ENCODE measurements at regions of chr1 and their contacts with region 1.

Region 1: DNA sequence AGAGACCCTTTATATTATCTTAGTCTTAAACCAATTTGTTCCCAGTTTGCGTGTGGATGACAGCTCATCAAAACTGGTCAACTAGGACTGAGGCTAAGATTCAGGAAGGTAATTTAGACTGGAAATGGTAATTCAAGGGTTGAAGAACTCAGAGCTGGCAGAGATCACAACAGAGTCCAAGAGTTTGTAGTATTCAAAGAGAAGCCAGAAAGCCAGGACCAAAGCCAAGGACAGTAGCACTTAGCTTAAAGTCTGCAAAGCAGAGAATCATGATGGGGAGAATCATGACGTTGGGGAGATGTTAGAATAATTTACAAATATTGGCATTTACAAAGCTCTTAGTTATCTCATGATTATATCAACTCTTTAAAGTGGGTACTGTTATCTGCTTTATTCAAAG is 32.6 kb downstream of the RNF11 start:
- DNase-seq: no peak
- H3K4me3 ChIP-seq: peak overlapping the region in 1 of 7 experiments; percentile 23
- H3K27ac ChIP-seq: peak overlapping the region in 1 of 2 experiments; percentile 64
- H3K4me1 ChIP-seq: peaks cover 10 to 51% (median 34%) of the 10 kb centered on the region in 4 experiments
- H3K27me3 ChIP-seq: no peaks in the 10 kb centered on the region

Region 2: DNA sequence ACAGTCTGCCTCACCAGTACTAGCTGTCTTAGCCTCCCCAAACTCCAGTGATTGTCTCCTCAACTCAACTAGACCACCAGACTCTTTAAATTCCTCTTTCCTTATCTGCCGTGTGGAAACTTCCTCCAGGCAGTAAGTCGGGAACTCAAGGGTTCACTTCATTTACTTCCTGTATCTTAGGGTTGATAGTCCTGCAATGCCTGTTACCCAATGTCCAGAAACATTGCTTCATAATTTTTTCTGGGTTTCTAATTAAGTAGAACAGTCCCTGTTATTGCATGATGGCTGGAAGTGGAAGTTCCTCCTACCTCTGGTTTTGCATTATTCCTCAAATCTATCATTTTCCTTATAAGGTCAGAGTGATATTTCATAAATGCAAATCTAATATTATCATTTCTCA is 93.4 kb before region 1 on chr1:
- CTCF ChIA-PET with region 1: no interaction called
- POLR2A ChIA-PET with region 1: no interaction called
- DNase-seq: peak in 1 of 3 donors; percentile 6
- H3K4me3 ChIP-seq: no peak overlapping the region
- H3K27ac ChIP-seq: no peak overlapping the region
- H3K4me1 ChIP-seq: peaks cover 0 to 6% (median 1%) of the 10 kb centered on the region in 4 experiments
- H3K27me3 ChIP-seq: no peaks in the 10 kb centered on the region

Region 3: GRCh38 chr1:51255331-51255730 is 13.3 kb before region 1 on chr1:
- CTCF ChIA-PET with region 1: interaction called, 12 read pairs
- POLR2A ChIA-PET with region 1: no interaction called
- DNase-seq: no peak
- H3K4me3 ChIP-seq: no peak overlapping the region
- H3K27ac ChIP-seq: no peak overlapping the region
- H3K4me1 ChIP-seq: peaks cover 0 to 2% (median 0%) of the 10 kb centered on the region in 4 experiments
- H3K27me3 ChIP-seq: no peaks in the 10 kb centered on the region

Region 4: GRCh38 chr1:51518033-51518585 is 249.5 kb after region 1 on chr1:
- CTCF ChIA-PET with region 1: no interaction called
- POLR2A ChIA-PET with region 1: no interaction called
- DNase-seq: peak in 2 of 3 donors; percentile 58 to 70
- H3K4me3 ChIP-seq: peak overlapping the region; percentile 84 to 98 (median 91)
- H3K27ac ChIP-seq: peak overlapping the region; percentile 72 to 89
- H3K4me1 ChIP-seq: peaks cover 26 to 61% (median 40%) of the 10 kb centered on the region in 4 experiments
- H3K27me3 ChIP-seq: no peaks in the 10 kb centered on the region

Measured in common myeloid progenitor, CD34-positive (primary cell).